ENCODE measurements at regions of chr2 and their contacts with region 1.

Region 1: DNA sequence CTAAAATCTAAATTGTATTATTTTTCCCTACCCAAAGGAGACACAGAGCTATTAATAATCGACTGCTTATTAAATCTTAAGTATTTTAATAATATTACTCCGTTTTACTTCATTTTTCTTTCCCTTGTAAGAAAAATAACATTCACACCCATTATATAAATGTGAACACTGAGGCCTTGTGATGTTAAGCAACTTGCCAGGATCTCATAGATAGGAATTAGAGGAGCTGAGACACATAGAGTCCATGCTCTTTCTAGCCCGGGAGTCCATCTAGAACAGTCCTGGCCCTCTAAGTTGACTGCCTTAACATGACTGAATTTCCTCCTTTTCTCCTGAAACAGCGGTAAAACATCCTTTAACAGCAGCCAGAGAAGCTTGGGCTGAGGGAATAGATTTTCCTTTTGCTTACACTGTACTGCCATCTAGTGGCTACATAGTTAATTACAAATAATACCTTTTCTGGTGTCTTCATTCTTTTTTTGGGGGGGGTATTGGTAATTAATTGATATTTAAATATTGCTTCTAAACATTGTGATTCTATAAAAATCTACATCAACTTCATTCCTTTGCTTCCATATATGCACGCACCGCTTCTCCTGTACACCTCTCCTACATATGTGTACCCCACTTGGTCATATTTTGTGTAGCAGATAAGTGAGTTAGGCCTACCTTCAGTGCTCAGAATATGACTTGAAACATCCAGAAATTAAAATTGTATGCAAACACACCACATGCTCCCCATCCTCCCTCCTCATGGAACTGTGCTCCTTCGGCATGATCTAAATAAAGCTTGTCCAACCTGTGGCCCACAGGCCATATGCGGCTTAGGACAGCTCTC is 125.8 kb upstream of the HNMT start:
- ATAC-seq: peak; percentile 35 to 63 (median 46)
- H3K4me3 ChIP-seq: no peak overlapping the region
- H3K27ac ChIP-seq: no peak overlapping the region
- H3K4me1 ChIP-seq: peaks cover 0 to 6% of the 10 kb centered on the region in 2 donors

Region 2: GRCh38 chr2:135876066-135876711 is 1962.3 kb before region 1 on chr2 and contains the start of gene MCM6:
- in situ Hi-C with region 1: loop called in 1 of 9 experiments (anchors 25 kb)
- ATAC-seq: peak; percentile 93 to 98 (median 96)
- H3K4me3 ChIP-seq: peak within 1 kb of the TSS; percentile 56 to 86 (median 63)
- H3K27ac ChIP-seq: peak within 1 kb of the TSS in 1 of 2 donors; percentile 51
- H3K4me1 ChIP-seq: peaks cover 6 to 17% of the 10 kb centered on the region in 2 donors
- total RNA-seq, gene MCM6: 9.1 to 124 (median 19.0) TPM

Region 3: GRCh38 chr2:136423516-136423996 is 1414.9 kb before region 1 on chr2:
- in situ Hi-C with region 1: loop called in 5 of 9 experiments (anchors 25 kb)
- ATAC-seq: peak; percentile 99 to 100 (median 100)
- H3K4me3 ChIP-seq: peak overlapping the region; percentile 33 to 47 (median 45)
- H3K27ac ChIP-seq: no peak overlapping the region
- H3K4me1 ChIP-seq: peaks cover 0 to 2% of the 10 kb centered on the region in 2 donors

Region 4: DNA sequence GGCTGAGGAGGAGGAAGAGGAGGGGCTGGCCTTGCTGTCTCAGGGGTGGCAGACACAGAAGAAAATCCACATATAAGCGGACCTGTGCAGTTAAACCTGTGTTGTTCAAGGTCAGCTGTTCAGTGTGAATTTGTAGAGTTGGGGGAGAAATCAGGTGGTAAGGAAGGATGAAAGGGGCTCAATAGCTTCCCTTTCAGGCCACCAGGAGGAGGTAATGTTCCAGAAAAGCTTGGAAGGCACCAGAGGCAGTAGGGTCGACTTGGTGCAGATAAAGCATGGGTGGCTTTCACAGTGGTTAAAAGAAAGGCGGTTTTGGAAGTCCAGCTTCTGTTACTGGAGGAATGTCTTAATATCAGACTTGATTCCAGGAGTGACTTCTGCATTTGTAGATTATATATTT is 905.8 kb before region 1 on chr2:
- in situ Hi-C with region 1: loop called in 1 of 9 experiments (anchors 25 kb)
- ATAC-seq: peak in 4 of 8 experiments; percentile 49 to 91 (median 58)
- H3K4me3 ChIP-seq: no peak overlapping the region
- H3K27ac ChIP-seq: no peak overlapping the region
- H3K4me1 ChIP-seq: peaks cover 0 to 3% of the 10 kb centered on the region in 2 donors

Region 5: GRCh38 chr2:137659612-137660011 is 178.9 kb before region 1 on chr2:
- in situ Hi-C with region 1: loop called in 1 of 9 experiments (anchors 25 kb)
- ATAC-seq: peak; percentile 61 to 92 (median 68)
- H3K4me3 ChIP-seq: no peak overlapping the region
- H3K27ac ChIP-seq: no peak overlapping the region
- H3K4me1 ChIP-seq: no peaks in the 10 kb centered on the region

Region 6: GRCh38 chr2:138035631-138036105 is 197.2 kb after region 1 on chr2:
- in situ Hi-C with region 1: no loop called
- ATAC-seq: peak in 2 of 8 experiments; percentile 78 to 88
- H3K4me3 ChIP-seq: no peak overlapping the region
- H3K27ac ChIP-seq: no peak overlapping the region
- H3K4me1 ChIP-seq: no peaks in the 10 kb centered on the region

Measured in motor neuron (in vitro differentiated cells).